ENCODE measurements at regions of chr11 and their contacts with region 1.

Region 1: GRCh38 chr11:87290304-87290922 is 252.7 kb downstream of the TMEM135 start:
- DNase-seq: no peak
- H3K4me3 ChIP-seq: no peak overlapping the region
- H3K27ac ChIP-seq: no peak overlapping the region
- H3K4me1 ChIP-seq: no peaks in the 10 kb centered on the region
- H3K27me3 ChIP-seq: no peaks in the 10 kb centered on the region
- CTCF ChIP-seq: peak; percentile 62 to 75

Region 2: DNA sequence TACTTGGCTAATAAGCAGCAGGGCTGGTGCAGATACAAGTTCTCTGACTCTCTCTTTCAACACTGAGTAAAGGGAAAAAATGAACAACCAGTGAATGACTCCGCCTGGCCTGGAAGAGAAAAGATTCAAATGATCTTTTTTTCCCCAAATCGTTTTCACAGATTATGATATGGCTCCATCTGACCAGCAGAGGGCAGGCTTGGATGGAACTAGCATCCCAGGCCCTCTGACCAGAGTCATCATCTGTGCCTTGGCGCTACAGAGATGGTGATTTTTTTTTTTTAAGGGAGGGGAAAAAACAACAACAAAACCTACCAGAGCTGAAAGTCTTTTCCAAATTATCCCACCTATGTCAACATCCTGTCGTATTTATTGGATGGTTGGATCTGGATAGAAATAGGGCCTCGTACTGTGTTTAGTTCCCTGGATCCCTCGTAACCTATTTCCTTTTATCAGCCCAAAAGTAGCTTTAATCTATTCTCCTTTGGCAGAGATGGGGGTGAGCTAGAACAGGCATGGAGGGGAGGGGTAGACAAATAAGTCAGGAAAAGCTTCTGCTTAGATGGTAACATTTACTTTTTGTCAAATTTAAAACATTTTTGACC is 420.3 kb before region 1 on chr11:
- intact Hi-C with region 1: loop called (anchors 5 kb)
- DNase-seq: peak; percentile 78 to 82
- H3K4me3 ChIP-seq: no peak overlapping the region
- H3K27ac ChIP-seq: peak overlapping the region; percentile 17 to 19
- H3K4me1 ChIP-seq: peaks cover 0 to 14% (median 0%) of the 10 kb centered on the region in 4 donors
- H3K27me3 ChIP-seq: no peaks in the 10 kb centered on the region
- CTCF ChIP-seq: peak; percentile 78 to 84

Region 3: GRCh38 chr11:86938900-86939880 is 351.2 kb before region 1 on chr11:
- intact Hi-C with region 1: loop called (anchors 2 kb)
- DNase-seq: no peak
- H3K4me3 ChIP-seq: peak overlapping the region in 1 of 2 donors; percentile 37
- H3K27ac ChIP-seq: peak overlapping the region; percentile 68 to 74
- H3K4me1 ChIP-seq: peaks cover 0 to 83% (median 48%) of the 10 kb centered on the region in 4 donors
- H3K27me3 ChIP-seq: no peaks in the 10 kb centered on the region
- CTCF ChIP-seq: peak; percentile 53 to 81

Region 4: DNA sequence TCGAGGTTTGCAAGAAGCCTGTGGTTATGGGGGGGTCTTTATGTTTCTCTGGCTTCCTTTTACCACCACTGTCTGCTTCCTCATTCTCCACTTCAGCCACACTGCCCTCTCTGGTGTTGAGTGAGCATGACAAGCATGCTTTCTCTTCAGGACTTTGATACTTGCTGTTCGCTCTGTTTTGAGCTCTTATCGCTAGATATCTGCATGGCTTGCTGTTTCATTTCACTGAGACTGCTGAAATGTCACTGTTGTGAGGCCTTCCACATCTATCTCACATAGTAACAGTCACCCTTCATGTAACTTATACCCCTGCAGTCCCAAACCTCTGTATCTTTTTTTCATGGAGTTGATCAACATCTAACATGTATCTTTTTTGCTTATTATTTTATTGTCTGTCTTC is 192.8 kb before region 1 on chr11:
- intact Hi-C with region 1: no loop called
- DNase-seq: no peak
- H3K4me3 ChIP-seq: no peak overlapping the region
- H3K27ac ChIP-seq: no peak overlapping the region
- H3K4me1 ChIP-seq: no peaks in the 10 kb centered on the region
- H3K27me3 ChIP-seq: no peaks in the 10 kb centered on the region
- CTCF ChIP-seq: peak; percentile 25 to 41

Region 5: DNA sequence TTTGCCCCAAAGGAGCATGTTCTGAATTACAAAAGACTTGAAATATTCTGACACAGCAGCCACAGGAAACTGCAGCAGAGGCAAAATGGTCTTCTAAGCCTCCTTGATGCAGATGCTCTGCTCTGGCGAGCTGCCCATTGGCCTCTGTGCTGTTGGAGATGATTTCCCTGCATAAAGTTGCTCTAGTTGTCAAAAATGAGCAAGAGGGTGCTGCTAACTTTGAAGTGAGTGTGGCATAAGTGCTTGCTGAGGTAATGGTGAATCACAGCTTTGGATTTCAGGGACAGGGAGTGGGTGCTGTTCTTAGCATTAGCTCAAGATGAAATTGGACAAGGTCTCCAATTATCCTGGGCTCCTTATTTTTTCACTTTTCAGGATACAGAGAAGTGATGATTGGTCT is 182.8 kb after region 1 on chr11:
- intact Hi-C with region 1: no loop called
- DNase-seq: no peak
- H3K4me3 ChIP-seq: no peak overlapping the region
- H3K27ac ChIP-seq: no peak overlapping the region
- H3K4me1 ChIP-seq: no peaks in the 10 kb centered on the region
- H3K27me3 ChIP-seq: no peaks in the 10 kb centered on the region
- CTCF ChIP-seq: no peak